ENCODE measurements at regions of chr9 and their contacts with region 1.

Region 1: GRCh38 chr9:75200892-75201470 is 112.7 kb downstream of the OSTF1 start:
- DNase-seq: peak; percentile 4
- ATAC-seq: no peak
- H3K4me3 ChIP-seq: no peak overlapping the region
- H3K27ac ChIP-seq: no peak overlapping the region
- H3K4me1 ChIP-seq: no peaks in the 10 kb centered on the region
- H3K27me3 ChIP-seq: no peaks in the 10 kb centered on the region
- CTCF ChIP-seq: peak; percentile 53; the same call in 1 of the 2 replicates

Region 2: DNA sequence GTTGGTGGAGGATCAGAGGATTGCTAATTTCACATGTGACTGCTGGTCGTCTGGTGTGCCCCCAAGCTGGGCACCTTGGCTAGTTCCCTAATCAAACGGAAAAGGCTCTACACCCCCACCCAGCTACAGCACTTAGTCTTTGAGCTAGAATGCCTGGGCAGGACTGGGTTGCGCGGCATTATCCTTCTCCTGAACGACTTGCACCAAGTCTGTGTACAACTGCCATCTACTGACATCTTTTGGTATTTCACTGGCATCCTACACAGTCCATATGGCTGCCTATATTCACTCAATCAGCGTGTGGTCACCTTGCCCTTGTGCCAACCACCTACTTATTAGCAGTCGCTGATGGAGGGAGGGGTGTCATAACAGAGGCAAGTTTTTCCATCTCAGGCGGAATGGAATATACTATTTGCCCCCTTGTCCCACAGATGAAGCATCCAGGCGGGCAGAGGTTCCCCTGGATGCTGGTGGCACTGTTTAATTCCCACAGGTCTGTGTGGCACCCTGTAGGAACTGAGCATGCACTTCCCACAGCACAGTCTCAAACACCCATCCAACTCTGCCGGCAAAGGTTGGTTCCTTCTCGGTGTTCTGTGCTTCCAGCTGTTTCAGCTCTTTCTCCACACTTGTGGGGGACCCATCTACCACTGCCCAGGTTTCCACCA is 37.5 kb after region 1 on chr9:
- CTCF ChIA-PET with region 1: no interaction called
- POLR2A ChIA-PET with region 1: no interaction called
- in situ Hi-C with region 1: no loop called
- intact Hi-C with region 1: loop called (anchors 1 kb)
- DNase-seq: peak; percentile 45
- ATAC-seq: peak; percentile 94
- H3K4me3 ChIP-seq: no peak overlapping the region
- H3K27ac ChIP-seq: no peak overlapping the region
- H3K4me1 ChIP-seq: no peaks in the 10 kb centered on the region
- H3K27me3 ChIP-seq: no peaks in the 10 kb centered on the region; the same call in 1 of the 2 replicates
- CTCF ChIP-seq: peak; percentile 64

Region 3: GRCh38 chr9:75455444-75455921 is 254.5 kb after region 1 on chr9:
- CTCF ChIA-PET with region 1: no interaction called
- POLR2A ChIA-PET with region 1: no interaction called
- in situ Hi-C with region 1: no loop called
- intact Hi-C with region 1: no loop called
- DNase-seq: no peak
- ATAC-seq: no peak
- H3K4me3 ChIP-seq: no peak overlapping the region
- H3K27ac ChIP-seq: no peak overlapping the region
- H3K4me1 ChIP-seq: no peaks in the 10 kb centered on the region
- H3K27me3 ChIP-seq: no peaks in the 10 kb centered on the region
- CTCF ChIP-seq: no peak

Region 4: DNA sequence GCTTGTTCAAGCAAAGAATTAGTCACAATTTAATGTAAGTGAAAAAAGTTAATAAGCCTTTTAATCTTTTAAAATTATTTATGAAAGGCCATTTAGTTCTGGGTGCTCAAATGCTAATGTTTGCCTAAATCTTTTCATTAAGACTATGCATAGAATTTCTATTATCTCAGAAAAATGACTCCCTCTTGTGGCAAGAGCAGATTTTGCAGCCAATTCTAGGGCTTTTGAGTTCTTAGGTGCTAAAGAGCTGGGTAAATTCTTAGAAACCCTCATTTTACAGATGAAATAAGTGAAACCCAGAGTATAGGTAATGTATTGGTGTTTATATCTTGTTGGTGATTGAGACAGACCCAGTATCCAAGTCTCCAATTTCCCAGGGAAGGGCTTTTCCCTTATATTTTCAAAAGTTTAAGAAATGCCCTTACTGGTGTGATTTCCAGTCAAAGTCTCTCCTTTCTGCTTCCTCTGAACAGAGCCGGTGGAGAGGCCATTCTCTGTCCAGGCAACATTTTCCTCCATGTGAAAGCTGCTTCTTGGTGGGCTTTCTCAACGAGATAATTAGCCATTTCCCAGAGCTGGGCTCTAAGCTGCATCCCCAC is 665.4 kb after region 1 on chr9:
- CTCF ChIA-PET with region 1: interaction called, 5 read pairs
- POLR2A ChIA-PET with region 1: no interaction called
- in situ Hi-C with region 1: no loop called
- intact Hi-C with region 1: loop called (anchors 5 kb)
- DNase-seq: no peak
- ATAC-seq: no peak
- H3K4me3 ChIP-seq: no peak overlapping the region
- H3K27ac ChIP-seq: no peak overlapping the region
- H3K4me1 ChIP-seq: no peaks in the 10 kb centered on the region
- H3K27me3 ChIP-seq: no peaks in the 10 kb centered on the region
- CTCF ChIP-seq: peak; percentile 67; the same call in 1 of the 2 replicates

Region 5: GRCh38 chr9:76302947-76303940 is 1102.3 kb after region 1 on chr9:
- CTCF ChIA-PET with region 1: no interaction called
- POLR2A ChIA-PET with region 1: no interaction called
- in situ Hi-C with region 1: no loop called
- intact Hi-C with region 1: loop called (anchors 5 kb)
- DNase-seq: no peak
- ATAC-seq: no peak
- H3K4me3 ChIP-seq: no peak overlapping the region
- H3K27ac ChIP-seq: no peak overlapping the region
- H3K4me1 ChIP-seq: no peaks in the 10 kb centered on the region
- H3K27me3 ChIP-seq: no peaks in the 10 kb centered on the region; the same call in 1 of the 2 replicates
- CTCF ChIP-seq: peak; percentile 62